ENCODE measurements at regions of chr12 and their contacts with region 1.

Region 1: DNA sequence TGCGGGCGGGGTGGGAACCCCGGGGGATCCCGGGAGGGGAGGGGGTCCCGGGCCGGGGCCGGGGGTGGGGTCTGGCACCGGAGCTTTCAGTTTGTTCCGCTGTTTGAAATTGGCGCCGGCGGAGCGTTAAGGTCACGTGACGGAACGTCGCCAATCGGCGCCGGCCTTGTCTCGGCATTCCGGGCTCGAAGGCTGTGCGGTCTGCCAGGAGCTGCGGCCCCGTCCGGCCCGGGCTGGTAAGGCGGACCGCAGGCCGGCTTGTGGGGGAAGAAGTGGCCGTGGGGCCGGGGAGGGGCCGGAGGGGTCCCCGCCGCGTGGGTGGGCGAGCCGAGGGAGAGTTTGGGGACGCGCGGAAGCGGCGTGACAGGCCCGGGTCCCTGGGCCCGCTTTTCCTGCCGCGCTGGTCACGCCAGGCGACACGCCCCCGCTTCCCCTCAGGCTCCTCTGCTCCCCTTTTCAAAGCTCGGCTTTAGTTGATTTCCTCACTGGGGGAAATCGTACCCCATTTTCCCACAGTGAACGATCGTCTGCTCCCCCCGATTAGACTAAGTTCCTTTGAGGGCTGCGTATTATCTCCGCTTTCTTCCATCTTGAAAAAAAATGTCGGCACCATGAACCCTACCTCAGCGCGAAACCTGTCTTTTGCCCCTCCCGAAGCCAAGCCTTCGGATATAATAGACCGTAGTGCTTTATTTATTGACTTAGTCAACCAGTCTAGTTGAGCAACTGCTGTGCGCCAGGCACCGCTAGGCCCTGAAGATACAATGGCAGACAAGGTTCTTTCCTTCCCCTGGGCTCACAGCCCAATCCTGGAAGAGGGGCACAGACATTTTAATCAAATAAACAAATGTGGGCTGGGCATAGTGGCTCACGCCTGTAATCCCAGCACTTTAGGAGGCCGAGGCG is at the starts of genes FOXM1 and RHNO1:
- DNase-seq: peak; percentile 88

Region 2: GRCh38 chr12:2864198-2864597 is 13.1 kb before region 1 on chr12:
- CTCF ChIA-PET with region 1: interaction called, 4 read pairs
- POLR2A ChIA-PET with region 1: interaction called, 10 read pairs
- DNase-seq: no peak

Region 3: DNA sequence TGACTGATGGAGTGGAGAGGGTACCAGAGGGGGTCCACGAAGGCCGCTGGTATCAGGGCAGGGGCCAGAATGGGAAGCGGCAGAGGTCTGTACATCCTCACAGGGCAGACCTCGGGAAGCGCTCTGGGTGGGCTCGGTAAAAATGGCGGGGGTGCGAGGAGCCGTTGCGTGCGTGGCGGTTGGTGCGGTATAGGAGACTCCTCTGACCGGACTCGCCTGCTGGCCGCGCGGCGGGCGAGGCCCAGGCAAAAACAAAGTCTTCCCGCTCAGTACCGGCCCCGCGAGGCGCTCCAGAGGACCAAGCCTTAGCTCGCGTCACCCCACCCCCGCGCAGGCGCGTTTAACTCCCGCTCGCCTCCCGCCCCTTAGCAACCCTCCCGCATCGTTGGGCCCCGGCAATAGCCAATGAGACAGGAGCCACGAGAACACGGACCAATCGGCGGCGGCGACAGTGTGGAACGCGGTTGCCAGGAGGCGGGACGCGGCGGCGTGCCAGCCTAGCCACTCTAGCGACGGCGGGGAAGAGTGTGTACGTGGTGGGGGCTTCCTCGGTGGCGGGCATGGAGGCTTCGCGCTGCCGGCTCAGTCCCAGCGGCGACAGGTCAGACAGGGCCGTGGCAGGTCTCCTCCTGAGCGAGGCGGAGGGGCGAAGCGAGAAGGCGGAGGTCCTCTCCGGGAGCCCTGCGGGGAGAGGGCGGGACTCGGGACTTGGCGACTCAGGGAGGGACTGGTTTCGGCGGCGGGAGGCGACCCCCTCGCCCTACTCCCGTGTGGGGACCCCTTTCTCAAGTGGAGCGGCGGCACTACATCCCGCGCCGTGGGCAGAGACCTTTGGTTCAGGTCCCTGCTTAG is 13.3 kb after region 1 on chr12 and contains the start of gene TULP3:
- CTCF ChIA-PET with region 1: interaction called, 3 read pairs
- POLR2A ChIA-PET with region 1: interaction called, 23 read pairs
- DNase-seq: peak; percentile 95

Measured in HEK293T (cell line).